Adrenal gland (tissue), 19 donors: ENCODE measurements at regions of chr2 and their contacts with region 1.

Region 1: DNA sequence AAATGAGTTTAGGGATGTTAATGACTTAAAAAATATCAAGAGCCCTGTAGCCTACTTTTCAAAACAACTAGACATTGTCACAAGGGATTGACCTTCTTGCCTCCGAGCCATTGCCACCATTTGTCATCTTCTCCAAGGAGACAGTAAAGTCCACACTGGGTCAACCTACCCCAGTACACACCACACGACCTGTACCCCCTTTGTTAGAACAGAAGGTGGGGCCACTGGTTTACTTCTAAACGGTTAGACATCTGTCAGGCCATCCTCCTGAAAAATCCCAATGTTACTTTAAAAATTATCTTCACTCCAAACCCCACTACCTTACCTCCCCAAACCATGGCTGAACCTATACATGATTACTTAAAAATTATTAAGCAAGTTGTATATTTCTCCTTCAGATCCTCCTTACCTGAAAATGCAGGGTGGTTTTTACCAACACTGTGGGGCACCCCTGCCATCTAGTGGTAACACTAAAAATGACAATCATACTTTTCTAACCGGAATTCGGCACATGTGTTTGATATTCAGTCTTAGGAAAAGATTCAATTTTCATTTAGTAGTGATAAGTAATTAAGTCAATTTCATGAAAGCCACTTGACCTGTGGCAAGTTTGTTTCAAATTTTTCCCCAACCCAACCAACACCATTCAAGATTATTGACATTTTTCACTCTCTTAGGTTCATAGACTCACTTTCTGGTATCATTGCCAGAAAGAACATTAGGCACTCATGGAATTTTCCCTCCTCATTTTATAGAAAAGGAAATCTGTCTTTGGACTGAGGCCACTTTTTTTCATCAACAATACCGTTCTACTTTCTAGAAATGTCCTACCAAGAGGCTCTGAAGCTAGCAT is 265.3 kb upstream of the PKDCC start:
- DNase-seq: peak in 5 of 7 donors; percentile 13 to 57 (median 23)
- H3K4me3 ChIP-seq: no peak overlapping the region
- H3K27ac ChIP-seq: no peak overlapping the region
- H3K4me1 ChIP-seq: no peaks in the 10 kb centered on the region
- H3K27me3 ChIP-seq: no peaks in the 10 kb centered on the region
- CTCF ChIP-seq: peak; percentile 75 to 88 (median 86)
- POLR2A ChIP-seq: no peak

Region 2: GRCh38 chr2:39913648-39914461 is 1868.7 kb before region 1 on chr2:
- intact Hi-C with region 1: loop called in 1 of 2 experiments (anchors 10 kb)
- DNase-seq: peak in 1 of 7 donors; percentile 20
- H3K4me3 ChIP-seq: no peak overlapping the region
- H3K27ac ChIP-seq: no peak overlapping the region
- H3K4me1 ChIP-seq: no peaks in the 10 kb centered on the region
- H3K27me3 ChIP-seq: no peaks in the 10 kb centered on the region
- CTCF ChIP-seq: peak; percentile 71 to 84 (median 80)
- POLR2A ChIP-seq: no peak

Region 3: GRCh38 chr2:41414486-41415230 is 367.9 kb before region 1 on chr2:
- intact Hi-C with region 1: loop called in 1 of 2 experiments (anchors 10 kb)
- DNase-seq: peak in 5 of 7 donors; percentile 15 to 51 (median 29)
- H3K4me3 ChIP-seq: no peak overlapping the region
- H3K27ac ChIP-seq: no peak overlapping the region
- H3K4me1 ChIP-seq: no peaks in the 10 kb centered on the region
- H3K27me3 ChIP-seq: no peaks in the 10 kb centered on the region
- CTCF ChIP-seq: peak; percentile 50 to 70 (median 62)
- POLR2A ChIP-seq: no peak